A549 (cell line): ENCODE measurements at regions of chr10 and their contacts with region 1.

Region 1: GRCh38 chr10:75401569-75402485 is at the start of gene ZNF503:
- DNase-seq: peak; percentile 97 to 98
- ATAC-seq: peak; percentile 70 to 84
- H3K4me3 ChIP-seq: peak within 1 kb of the TSS; percentile 92
- H3K27ac ChIP-seq: peak within 1 kb of the TSS; percentile 94 to 98
- H3K4me1 ChIP-seq: peaks cover 11% of the 10 kb centered on the region
- CTCF ChIP-seq: no peak
- EP300 ChIP-seq: no peak; a peak in 1 of 5 replicates
- POLR2A ChIP-seq: peak; percentile 94
- RAD21 ChIP-seq: 0 out of 5 replicates have a peak, but pooled peaks of 1 of the 2 experiments have one; percentile 12
- polyA plus RNA-seq, gene ZNF503: 0.54 and 0.71 TPM in 2 replicates

Region 2: DNA sequence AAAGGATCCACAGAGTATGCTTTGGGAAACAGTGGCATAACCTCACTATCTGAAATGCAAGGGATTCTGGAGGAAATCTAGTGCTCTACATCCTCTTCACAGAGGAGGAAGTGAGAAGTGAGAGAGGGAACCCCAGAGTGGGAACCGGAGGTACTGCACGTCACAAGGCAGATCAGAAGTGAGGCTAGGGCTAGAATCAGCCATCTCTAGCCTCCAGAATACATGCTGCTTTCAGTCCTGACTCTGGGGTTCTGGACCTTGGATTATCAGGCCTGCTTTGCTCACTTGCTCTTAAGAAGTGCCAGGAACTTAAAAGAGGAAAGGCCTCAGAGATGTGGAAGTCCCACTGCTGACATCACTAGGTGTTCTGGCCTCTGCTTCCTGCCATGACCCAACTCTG is 26.0 kb before region 1 on chr10:
- CTCF ChIA-PET with region 1: no interaction called
- POLR2A ChIA-PET with region 1: no interaction called
- DNase-seq: no peak
- ATAC-seq: peak in 1 of 2 experiments; percentile 45; a peak in 3 of 6 replicates
- H3K4me3 ChIP-seq: no peak overlapping the region
- H3K27ac ChIP-seq: no peak overlapping the region
- H3K4me1 ChIP-seq: no peaks in the 10 kb centered on the region
- CTCF ChIP-seq: no peak
- EP300 ChIP-seq: no peak
- POLR2A ChIP-seq: no peak
- RAD21 ChIP-seq: no peak

Region 3: DNA sequence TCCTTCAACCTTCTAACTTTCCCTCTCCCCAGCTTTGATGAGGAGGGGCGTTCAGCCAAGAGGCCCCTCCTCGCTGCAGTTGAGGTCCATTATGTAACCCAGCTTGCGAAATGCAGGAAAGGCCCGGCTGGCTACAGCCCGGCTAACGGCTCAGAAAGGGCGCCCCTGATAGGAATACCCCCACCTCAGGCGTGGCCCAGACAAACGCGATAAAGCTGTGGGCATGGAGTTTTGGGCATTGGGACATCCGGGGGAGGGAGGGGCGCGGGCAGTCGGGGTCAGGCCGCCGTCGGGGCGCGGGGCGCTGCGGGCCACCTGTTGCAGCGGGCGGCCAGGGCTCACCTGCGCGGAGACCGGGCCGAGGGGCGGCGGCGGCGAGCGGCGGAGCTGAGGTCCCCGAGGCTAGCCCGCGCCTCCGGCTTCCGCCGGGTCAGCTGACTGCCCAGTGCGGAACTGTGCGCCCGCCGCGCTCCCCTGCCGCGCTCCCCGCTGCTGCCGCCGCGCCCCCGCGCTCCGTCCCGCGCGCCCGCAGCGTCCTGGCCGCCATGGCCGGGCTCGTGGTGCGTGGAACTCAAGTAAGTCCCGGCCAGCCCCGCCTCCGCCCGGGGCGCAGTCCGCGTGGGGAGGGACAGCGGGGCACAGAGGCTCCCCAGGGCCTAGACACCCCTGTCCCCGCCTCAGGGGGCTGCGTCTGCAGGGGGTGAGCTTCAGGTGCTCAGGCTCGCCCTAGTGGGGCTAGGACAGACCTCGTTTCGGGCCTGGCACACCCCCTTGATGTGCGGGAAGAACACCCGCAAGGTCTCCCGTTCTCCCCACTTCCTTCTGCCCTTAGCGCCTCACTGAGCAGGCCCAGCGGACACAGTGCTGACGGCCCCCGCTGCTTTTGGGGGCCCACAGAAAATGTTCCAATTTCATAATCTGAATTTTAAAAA is 29.6 kb after region 1 on chr10 and contains the start of gene LRMDA:
- CTCF ChIA-PET with region 1: interaction called, 4 read pairs
- POLR2A ChIA-PET with region 1: interaction called, 34 read pairs
- DNase-seq: peak; percentile 22 to 46
- ATAC-seq: peak; percentile 58
- H3K4me3 ChIP-seq: peak within 1 kb of the TSS; percentile 64
- H3K27ac ChIP-seq: peak within 1 kb of the TSS; percentile 90 to 95
- H3K4me1 ChIP-seq: peaks cover 50% of the 10 kb centered on the region
- CTCF ChIP-seq: no peak
- EP300 ChIP-seq: no peak
- POLR2A ChIP-seq: no peak
- RAD21 ChIP-seq: peak in 1 of 2 experiments; percentile 8; a peak in 1 of 5 replicates
- polyA plus RNA-seq, gene LRMDA: 5.2 and 5.6 TPM in 2 replicates

Region 4: DNA sequence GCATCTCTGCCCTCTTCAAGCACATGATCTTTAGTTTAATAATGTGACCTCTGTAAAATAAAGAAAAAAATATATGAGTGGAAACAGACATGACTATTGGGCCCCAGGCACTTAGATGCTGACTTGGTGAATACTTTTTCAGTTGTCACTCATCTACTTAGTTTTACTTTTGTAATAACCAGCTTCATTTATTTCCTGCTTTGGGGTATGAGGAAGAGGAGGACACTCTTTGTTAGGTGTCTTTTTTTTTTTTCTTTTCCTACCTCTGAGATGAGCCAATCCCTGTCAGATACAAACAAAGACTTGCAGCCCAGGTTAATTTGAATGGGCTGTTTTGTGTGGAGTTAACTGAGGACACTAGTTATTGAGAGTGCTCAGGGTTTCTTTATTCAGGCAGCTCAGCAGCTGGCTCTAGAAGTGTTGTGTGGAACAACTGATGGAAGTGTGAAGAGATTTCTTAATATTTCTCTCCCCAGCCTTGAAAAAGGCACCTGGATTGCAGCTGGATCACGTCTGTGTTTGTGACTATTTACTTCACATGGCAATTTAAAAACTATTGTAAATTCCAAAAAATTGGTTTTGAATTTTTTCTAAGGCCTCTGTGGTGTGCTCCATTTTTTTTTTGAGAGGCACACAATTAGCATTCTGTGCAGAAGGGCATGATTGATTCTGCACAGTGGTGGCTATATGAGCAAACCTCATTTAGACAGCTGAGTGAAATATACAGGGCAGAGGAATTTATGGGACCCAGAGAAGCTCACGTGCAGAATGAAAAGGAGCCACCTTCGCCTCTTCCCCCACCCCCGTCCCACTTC is 363.4 kb after region 1 on chr10:
- CTCF ChIA-PET with region 1: interaction called, 3 read pairs
- POLR2A ChIA-PET with region 1: interaction called, 17 read pairs
- DNase-seq: no peak
- ATAC-seq: peak in 1 of 2 experiments; percentile 25; a peak in 4 of 6 replicates
- H3K4me3 ChIP-seq: no peak overlapping the region
- H3K27ac ChIP-seq: peak overlapping the region; percentile 59 to 79; a peak in 5 of 6 replicates
- H3K4me1 ChIP-seq: peaks cover 38% of the 10 kb centered on the region
- CTCF ChIP-seq: no peak
- EP300 ChIP-seq: no peak
- POLR2A ChIP-seq: no peak
- RAD21 ChIP-seq: no peak

Region 5: DNA sequence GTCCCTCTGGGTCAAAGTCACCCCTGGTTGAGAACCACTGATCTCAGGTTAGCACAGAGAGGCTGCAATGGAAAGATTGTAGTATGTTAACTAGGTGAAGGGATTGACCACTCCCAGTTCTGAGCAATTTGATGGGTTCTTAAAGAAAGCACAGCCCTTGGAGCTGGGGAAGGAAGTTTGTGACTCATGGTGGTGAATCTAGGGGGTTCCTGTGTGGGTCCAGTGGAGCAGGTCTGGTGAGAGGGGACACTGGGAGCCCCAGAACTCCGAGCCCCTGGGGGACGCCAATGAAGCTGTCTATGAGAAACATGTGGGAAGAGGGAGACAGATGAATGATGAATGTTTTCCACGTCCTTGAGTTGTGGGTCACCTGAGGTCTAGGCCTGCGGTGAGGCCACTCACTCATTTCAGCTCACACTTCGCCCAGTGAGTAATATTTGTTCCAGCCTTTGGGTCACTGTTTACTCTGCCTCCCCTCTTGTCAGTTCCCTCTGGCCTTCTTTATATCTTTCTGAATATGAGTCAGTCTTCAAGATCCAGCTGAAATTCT is 371.5 kb after region 1 on chr10:
- CTCF ChIA-PET with region 1: interaction called, 7 read pairs
- POLR2A ChIA-PET with region 1: interaction called, 12 read pairs
- DNase-seq: peak; percentile 41 to 67
- ATAC-seq: peak; percentile 97 to 98
- H3K4me3 ChIP-seq: no peak overlapping the region
- H3K27ac ChIP-seq: peak overlapping the region; percentile 63 to 72
- H3K4me1 ChIP-seq: peaks cover 25% of the 10 kb centered on the region
- CTCF ChIP-seq: no peak
- EP300 ChIP-seq: peak; percentile 46 to 67; a peak in 3 of 5 replicates
- POLR2A ChIP-seq: no peak
- RAD21 ChIP-seq: peak in 1 of 2 experiments; percentile 36; a peak in 2 of 5 replicates

Region 6: DNA sequence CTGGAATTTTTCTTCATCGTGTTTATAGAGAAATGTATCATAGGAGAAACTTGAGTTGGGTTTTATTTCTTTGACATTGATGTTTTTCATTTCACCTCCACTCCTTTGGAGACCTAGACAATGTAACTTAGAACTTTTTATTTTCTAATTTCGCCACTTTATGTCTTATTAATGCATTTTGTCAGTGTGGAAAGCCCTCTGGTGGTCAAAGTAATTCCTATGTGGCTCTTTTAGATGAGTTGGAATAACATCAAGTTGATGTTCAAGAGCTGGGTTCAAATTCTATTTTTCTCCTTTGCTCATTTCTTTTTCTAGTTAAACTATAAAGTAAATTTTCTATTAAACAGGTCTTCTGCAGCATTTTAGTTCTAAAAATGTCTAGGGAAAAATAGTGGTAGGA is 508.2 kb after region 1 on chr10:
- CTCF ChIA-PET with region 1: interaction called, 38 read pairs
- POLR2A ChIA-PET with region 1: interaction called, 4 read pairs
- DNase-seq: peak in 1 of 2 experiments; percentile 19
- ATAC-seq: no peak
- H3K4me3 ChIP-seq: no peak overlapping the region
- H3K27ac ChIP-seq: no peak overlapping the region
- H3K4me1 ChIP-seq: no peaks in the 10 kb centered on the region
- CTCF ChIP-seq: peak; percentile 60
- EP300 ChIP-seq: no peak
- POLR2A ChIP-seq: no peak
- RAD21 ChIP-seq: peak; percentile 46 to 60

Region 7: GRCh38 chr10:76036111-76036940 is 634.5 kb after region 1 on chr10:
- CTCF ChIA-PET with region 1: interaction called, 83 read pairs
- POLR2A ChIA-PET with region 1: interaction called, 8 read pairs
- DNase-seq: peak; percentile 64 to 65
- ATAC-seq: peak; percentile 64 to 82
- H3K4me3 ChIP-seq: peak overlapping the region; percentile 9; the same call in 1 of the 3 replicates
- H3K27ac ChIP-seq: peak overlapping the region; percentile 47 to 75
- H3K4me1 ChIP-seq: peaks cover 48% of the 10 kb centered on the region
- CTCF ChIP-seq: peak; percentile 86
- EP300 ChIP-seq: no peak
- POLR2A ChIP-seq: no peak
- RAD21 ChIP-seq: peak; percentile 81 to 88